PC-9 (cell line): ENCODE measurements at regions of chr12 and their contacts with region 1.

Region 1: DNA sequence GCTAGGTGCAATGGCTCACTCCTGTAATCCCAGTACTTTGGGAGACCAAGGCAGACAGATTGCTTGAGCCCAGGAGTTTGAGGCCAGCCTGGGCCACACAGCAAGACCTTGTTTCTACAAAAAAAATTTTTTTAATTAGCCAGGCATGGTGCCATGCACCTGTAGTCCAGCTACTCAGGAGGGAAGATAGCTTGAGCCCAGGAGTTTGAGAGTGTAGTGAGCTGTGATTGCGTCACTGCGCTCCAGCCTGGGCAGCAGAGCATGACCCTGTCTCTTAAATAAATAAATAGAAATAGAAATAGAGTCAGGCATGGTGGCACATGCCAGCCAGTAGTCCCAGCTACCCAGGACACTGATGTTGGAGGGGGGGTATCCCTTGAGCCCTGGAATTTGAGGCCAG is 36.7 kb upstream of the CLIP1 start:
- DNase-seq: no peak
- H3K4me3 ChIP-seq: no peak overlapping the region
- H3K27ac ChIP-seq: no peak overlapping the region
- H3K4me1 ChIP-seq: peaks cover 15% of the 10 kb centered on the region
- H3K27me3 ChIP-seq: no peaks in the 10 kb centered on the region
- CTCF ChIP-seq: no peak

Region 2: DNA sequence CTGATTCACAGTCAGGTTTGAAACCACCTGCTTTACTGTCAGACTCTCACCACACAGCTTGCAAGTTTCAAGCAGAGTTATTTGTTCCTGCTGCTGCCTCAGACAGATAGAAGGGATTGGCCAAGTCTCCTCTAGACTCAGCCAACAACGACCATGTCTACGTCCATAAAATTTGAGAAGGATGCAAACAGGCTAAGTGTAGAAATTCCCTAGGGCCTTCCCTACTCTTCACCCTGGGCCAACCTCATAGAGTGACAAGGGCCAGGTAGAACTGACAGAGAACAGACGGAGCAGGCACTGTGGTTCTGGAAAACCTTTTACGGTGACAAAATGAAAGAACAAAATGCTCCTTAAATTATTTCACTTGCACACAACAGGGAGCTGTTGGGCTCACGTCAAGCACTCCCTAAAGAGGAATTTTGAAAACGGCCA is 76.3 kb before region 1 on chr12:
- CTCF ChIA-PET with region 1: interaction called, 10 read pairs
- POLR2A ChIA-PET with region 1: no interaction called
- intact Hi-C with region 1: no loop called
- DNase-seq: no peak
- H3K4me3 ChIP-seq: no peak overlapping the region
- H3K27ac ChIP-seq: no peak overlapping the region
- H3K4me1 ChIP-seq: no peaks in the 10 kb centered on the region
- H3K27me3 ChIP-seq: no peaks in the 10 kb centered on the region
- CTCF ChIP-seq: no peak

Region 3: GRCh38 chr12:122427412-122427811 is 31.8 kb before region 1 on chr12:
- CTCF ChIA-PET with region 1: no interaction called
- POLR2A ChIA-PET with region 1: no interaction called
- intact Hi-C with region 1: no loop called
- DNase-seq: no peak
- H3K4me3 ChIP-seq: no peak overlapping the region
- H3K27ac ChIP-seq: no peak overlapping the region
- H3K4me1 ChIP-seq: peaks cover 7% of the 10 kb centered on the region; the same call in 1 of the 2 replicates
- H3K27me3 ChIP-seq: no peaks in the 10 kb centered on the region
- CTCF ChIP-seq: no peak